IMR-90 (cell line): ENCODE measurements at regions of chr4 and their contacts with region 1.

Region 1: DNA sequence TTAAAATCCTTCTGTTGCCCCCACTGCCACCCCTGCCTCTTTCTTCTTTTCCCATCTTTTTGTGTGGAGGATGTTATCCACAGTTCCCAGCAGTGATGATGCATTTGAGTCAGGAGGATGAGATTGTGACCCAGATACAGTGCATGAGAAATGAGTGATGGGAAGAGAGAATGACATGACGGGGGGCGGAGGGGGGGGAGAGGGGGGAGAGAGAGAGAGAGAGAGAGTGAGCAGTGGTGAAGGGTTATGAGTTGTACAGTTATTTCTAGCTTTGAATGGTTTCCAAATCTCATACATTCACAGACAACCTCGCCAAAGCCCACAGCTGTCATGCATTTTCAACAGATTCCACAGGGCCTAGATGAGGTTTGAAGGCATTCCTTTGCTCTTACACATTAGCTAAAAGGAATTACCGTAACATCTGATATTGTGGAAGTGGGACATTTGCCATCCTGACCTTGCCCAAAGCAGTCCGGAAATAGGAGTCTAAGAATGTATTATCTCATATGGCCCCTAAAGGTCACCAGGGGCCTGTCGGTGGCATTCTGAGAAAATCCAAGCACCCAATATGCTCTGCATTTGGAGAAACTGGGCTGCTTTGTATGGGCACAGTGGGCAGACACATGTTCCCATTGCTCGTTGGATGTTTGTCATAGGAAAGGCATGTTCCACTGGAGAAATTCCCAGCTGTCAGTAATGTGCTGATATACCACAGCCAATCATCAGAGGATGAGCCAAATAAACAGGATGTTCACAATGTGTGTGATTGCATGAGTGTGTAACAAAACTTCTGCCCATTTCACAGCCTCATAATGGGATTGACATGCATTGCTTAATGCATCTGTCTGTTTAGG is 435.8 kb downstream of the SPRY1 start:
- DNase-seq: peak; percentile 100
- ATAC-seq: peak; percentile 84
- H3K4me3 ChIP-seq: no peak overlapping the region
- H3K27ac ChIP-seq: peak overlapping the region; percentile 83
- H3K4me1 ChIP-seq: peaks cover 14% of the 10 kb centered on the region
- H3K27me3 ChIP-seq: no peaks in the 10 kb centered on the region
- CTCF ChIP-seq: no peak
- POLR2A ChIP-seq: no peak
- RAD21 ChIP-seq: no peak

Region 2: GRCh38 chr4:123127218-123127617 is 705.2 kb before region 1 on chr4:
- CTCF ChIA-PET with region 1: no interaction called
- POLR2A ChIA-PET with region 1: no interaction called
- dilution Hi-C with region 1: no loop called
- in situ Hi-C with region 1: no loop called
- intact Hi-C with region 1: loop called (anchors 5 kb)
- DNase-seq: peak; percentile 42
- ATAC-seq: peak; percentile 83
- H3K4me3 ChIP-seq: no peak overlapping the region
- H3K27ac ChIP-seq: no peak overlapping the region
- H3K4me1 ChIP-seq: no peaks in the 10 kb centered on the region
- H3K27me3 ChIP-seq: no peaks in the 10 kb centered on the region
- CTCF ChIP-seq: peak; percentile 56
- POLR2A ChIP-seq: no peak
- RAD21 ChIP-seq: peak; percentile 61

Region 3: DNA sequence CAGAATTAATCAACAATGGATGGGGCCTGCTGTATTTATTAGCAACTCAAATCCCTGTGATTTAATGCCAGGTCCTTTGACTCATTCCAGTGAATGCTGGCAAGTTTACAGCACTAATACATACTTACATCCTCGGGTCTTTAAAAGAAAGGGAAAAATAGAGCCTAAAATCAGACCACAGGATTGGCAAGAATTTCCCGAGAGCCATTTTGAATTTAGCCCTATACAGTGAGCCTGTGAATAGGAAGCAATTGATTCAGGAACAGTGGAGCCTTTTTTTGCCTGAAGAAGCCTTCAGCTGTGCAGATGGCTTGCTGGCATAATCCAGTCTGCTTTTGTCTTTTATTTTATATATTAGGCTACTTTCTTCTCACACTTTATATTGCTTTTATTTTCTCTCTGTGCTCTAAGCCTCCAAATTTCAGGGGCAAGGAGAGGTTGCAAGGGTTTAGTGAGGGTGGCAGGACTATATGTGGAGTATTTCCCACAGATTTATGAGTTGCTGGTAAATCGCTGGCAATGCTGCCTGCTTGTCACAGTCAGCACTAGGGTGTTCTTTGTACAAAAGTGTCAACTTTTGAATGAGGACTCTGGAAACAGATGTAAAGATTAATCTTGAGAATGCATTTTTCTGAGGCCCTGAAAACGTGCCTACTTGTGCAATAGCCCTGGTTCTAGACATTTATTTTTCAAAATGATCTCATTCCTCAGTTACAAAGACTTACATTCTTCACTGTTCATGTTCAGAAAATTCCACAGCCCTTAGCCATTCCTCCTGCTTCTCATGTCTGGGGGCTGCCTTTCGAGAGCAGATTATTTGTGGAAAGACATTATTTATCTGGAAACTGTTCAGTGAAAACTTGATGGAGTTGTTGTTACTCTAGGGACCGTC is 132.3 kb before region 1 on chr4:
- CTCF ChIA-PET with region 1: no interaction called
- POLR2A ChIA-PET with region 1: no interaction called
- dilution Hi-C with region 1: no loop called
- in situ Hi-C with region 1: no loop called
- intact Hi-C with region 1: loop called (anchors 2 kb)
- DNase-seq: peak; percentile 93
- ATAC-seq: peak; percentile 92
- H3K4me3 ChIP-seq: peak overlapping the region; percentile 44; the same call in 1 of the 2 replicates
- H3K27ac ChIP-seq: peak overlapping the region; percentile 98
- H3K4me1 ChIP-seq: peaks cover 3% of the 10 kb centered on the region; the same call in 1 of the 2 replicates
- H3K27me3 ChIP-seq: no peaks in the 10 kb centered on the region
- CTCF ChIP-seq: no peak
- POLR2A ChIP-seq: no peak
- RAD21 ChIP-seq: no peak

Region 4: GRCh38 chr4:123986268-123986798 is 153.9 kb after region 1 on chr4:
- CTCF ChIA-PET with region 1: interaction called, 3 read pairs
- POLR2A ChIA-PET with region 1: no interaction called
- dilution Hi-C with region 1: no loop called
- in situ Hi-C with region 1: no loop called
- intact Hi-C with region 1: loop called (anchors 5 kb)
- DNase-seq: peak; percentile 92
- ATAC-seq: peak; percentile 90
- H3K4me3 ChIP-seq: peak overlapping the region; percentile 8; the same call in 1 of the 2 replicates
- H3K27ac ChIP-seq: peak overlapping the region; percentile 92
- H3K4me1 ChIP-seq: peaks cover 3% of the 10 kb centered on the region
- H3K27me3 ChIP-seq: no peaks in the 10 kb centered on the region
- CTCF ChIP-seq: no peak
- POLR2A ChIP-seq: no peak
- RAD21 ChIP-seq: no peak

Region 5: GRCh38 chr4:124334119-124334518 is 501.7 kb after region 1 on chr4:
- CTCF ChIA-PET with region 1: no interaction called
- POLR2A ChIA-PET with region 1: no interaction called
- dilution Hi-C with region 1: no loop called
- in situ Hi-C with region 1: no loop called
- intact Hi-C with region 1: no loop called
- DNase-seq: peak; percentile 89
- ATAC-seq: peak; percentile 96
- H3K4me3 ChIP-seq: no peak overlapping the region
- H3K27ac ChIP-seq: no peak overlapping the region
- H3K4me1 ChIP-seq: no peaks in the 10 kb centered on the region
- H3K27me3 ChIP-seq: no peaks in the 10 kb centered on the region
- CTCF ChIP-seq: peak; percentile 75
- POLR2A ChIP-seq: no peak
- RAD21 ChIP-seq: peak; percentile 80